ENCODE measurements at regions of chr14 and their contacts with region 1.

Region 1: GRCh38 chr14:31945074-31945613 is 132.0 kb upstream of the ARHGAP5 start:
- DNase-seq: no peak

Region 2: DNA sequence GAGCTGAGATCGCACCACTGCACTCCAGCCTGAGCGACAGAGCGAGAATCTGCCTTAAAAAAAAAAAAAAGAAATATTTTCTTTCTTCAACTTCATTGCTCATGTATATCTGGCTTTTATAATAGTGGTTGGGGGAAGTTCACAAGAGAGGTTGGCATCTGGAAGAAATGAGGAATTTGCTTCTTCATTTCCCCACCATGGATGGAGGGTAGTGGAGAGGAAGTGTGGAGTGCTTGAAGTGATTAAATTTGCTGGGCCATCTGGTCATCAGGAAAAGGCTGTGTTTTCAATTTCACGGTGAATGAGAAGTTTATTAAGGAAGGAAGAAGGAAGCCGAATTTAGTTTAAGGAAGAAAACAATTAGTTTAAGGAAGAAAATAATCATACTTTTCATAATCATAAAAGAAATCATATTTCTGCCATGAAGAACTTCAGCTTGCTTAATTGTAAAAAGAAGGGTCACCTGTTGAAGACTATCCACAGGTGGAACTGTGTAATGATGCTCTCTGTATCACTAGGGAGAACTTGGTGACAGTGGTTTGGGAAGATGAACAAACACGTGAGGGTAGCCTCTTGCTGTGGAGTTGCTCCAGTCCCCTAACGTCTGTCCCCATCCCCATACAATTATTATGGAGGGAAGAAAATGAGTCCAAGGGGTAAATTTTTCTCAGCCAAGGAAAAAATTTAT is 65.3 kb before region 1 on chr14:
- intact Hi-C with region 1: loop called in 1 of 2 experiments (anchors 2 kb)
- DNase-seq: no peak

Region 3: GRCh38 chr14:32244404-32244803 is 299.3 kb after region 1 on chr14:
- intact Hi-C with region 1: loop called in 1 of 2 experiments (anchors 10 kb)
- DNase-seq: no peak